CD4-positive, alpha-beta T cell (primary cell): ENCODE measurements at regions of chrX and their contacts with region 1.

Region 1: DNA sequence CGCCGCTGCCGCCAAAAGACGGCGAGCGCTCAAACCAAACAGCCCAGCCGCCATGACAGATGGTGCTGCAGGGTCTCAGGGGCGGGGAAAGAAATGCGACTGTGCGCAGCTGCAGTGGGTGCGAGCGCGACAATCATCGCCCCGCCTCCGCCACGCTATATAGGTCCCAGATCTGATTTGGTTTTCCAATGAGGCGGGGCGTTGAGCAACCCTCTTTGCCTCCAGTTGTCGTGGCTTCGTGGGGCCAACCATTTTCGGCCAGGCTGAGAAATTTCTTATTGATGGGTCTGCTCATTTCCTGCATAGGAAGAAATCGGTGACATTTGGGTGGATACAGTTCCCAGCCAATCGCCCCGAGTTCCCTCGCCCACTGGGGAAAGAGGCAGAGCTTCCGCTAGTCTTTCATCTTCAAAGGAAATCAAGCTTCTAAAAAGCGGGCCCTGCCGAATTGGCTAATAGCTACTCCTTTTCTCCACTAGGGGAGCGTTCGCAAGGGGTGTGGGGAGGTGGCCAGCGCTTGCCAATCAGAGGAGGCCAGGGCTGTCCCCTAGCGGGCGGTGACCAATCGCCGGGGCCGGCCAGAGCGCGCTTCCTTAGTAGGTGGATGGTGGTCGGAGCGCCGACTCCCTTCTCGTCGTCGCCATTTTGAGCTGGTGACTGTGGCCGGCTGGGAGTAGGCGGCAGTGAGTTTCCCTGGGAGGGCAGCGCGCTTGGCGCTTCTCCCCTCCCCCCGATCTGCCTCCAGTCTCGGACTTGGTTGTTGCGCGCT is at the starts of genes NDUFB11 and RBM10:
- DNase-seq: peak; percentile 74 to 95 (median 84)
- ATAC-seq: peak; percentile 81
- H3K4me3 ChIP-seq: peak within 1 kb of the TSS; percentile 85
- H3K4me3 Mint-ChIP-seq: peak within 1 kb of the TSS; percentile 98
- H3K27ac ChIP-seq: peak within 1 kb of the TSS; percentile 88 to 93
- H3K27ac Mint-ChIP-seq: peak within 1 kb of the TSS; percentile 99
- H3K4me1 ChIP-seq: peaks cover 31% of the 10 kb centered on the region
- H3K4me1 Mint-ChIP-seq: peaks cover 52% of the 10 kb centered on the region
- H3K27me3 ChIP-seq: no peaks in the 10 kb centered on the region
- H3K27me3 Mint-ChIP-seq: no peaks in the 10 kb centered on the region
- CTCF ChIP-seq: peak; percentile 58
- total RNA-seq, gene NDUFB11: 50.1 to 53.2 TPM
- total RNA-seq, gene RBM10: 27.3 to 29.4 TPM

Region 2: DNA sequence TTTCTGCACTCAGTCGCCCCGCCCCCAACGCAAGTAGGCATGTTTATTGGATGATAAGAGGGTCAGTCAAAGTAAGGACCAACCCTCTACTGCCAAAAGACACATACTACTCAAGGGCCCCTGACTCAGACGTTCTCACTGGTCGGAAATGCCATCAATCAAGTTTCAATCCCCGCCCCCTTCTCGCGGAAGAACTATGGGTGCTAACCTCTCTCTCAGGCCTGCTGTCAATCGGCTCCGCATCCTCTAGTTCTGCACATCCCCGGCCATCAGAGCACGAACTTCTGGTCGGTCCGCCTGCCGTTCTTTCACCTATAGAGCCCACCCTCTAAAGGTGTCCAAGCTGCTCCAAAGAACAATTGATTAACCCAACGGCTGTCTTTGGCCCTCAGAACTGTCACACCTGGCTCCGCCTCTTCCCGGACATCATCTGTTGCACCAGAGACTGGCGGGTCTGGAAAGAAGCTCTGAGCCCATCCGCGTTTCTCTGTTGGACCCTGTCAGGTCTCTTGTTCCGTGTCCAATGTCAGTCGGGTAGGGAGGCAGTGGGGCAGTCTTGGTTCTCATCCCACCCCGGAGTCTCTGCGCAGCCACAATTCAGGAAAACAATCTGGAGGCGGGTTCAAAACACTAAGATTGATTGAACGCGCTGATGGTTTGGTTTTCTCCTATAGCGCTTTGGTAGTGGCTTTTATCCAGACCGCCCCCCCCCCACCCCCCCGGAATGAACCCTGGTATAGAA is 15.5 kb before region 1 on chrX:
- CTCF ChIA-PET with region 1: interaction called, 14 read pairs
- POLR2A ChIA-PET with region 1: interaction called, 58 read pairs
- intact Hi-C with region 1: loop called (anchors 1 kb)
- DNase-seq: peak; percentile 77 to 95 (median 84)
- ATAC-seq: peak; percentile 98
- H3K4me3 ChIP-seq: peak overlapping the region; percentile 75
- H3K4me3 Mint-ChIP-seq: peak overlapping the region; percentile 99
- H3K27ac ChIP-seq: peak overlapping the region; percentile 53 to 60
- H3K27ac Mint-ChIP-seq: peak overlapping the region; percentile 98
- H3K4me1 ChIP-seq: peaks cover 13% of the 10 kb centered on the region
- H3K4me1 Mint-ChIP-seq: peaks cover 10% of the 10 kb centered on the region
- H3K27me3 ChIP-seq: no peaks in the 10 kb centered on the region
- H3K27me3 Mint-ChIP-seq: no peaks in the 10 kb centered on the region
- CTCF ChIP-seq: no peak

Region 3: GRCh38 chrX:47217642-47218279 is 73.0 kb after region 1 on chrX:
- CTCF ChIA-PET with region 1: interaction called, 3 read pairs
- POLR2A ChIA-PET with region 1: interaction called, 19 read pairs
- intact Hi-C with region 1: no loop called
- DNase-seq: peak; percentile 89 to 99 (median 96)
- ATAC-seq: peak; percentile 81
- H3K4me3 ChIP-seq: peak overlapping the region; percentile 81
- H3K4me3 Mint-ChIP-seq: peak overlapping the region; percentile 98
- H3K27ac ChIP-seq: peak overlapping the region; percentile 89 to 99
- H3K27ac Mint-ChIP-seq: peak overlapping the region; percentile 98
- H3K4me1 ChIP-seq: peaks cover 30% of the 10 kb centered on the region
- H3K4me1 Mint-ChIP-seq: peaks cover 38% of the 10 kb centered on the region
- H3K27me3 ChIP-seq: no peaks in the 10 kb centered on the region
- H3K27me3 Mint-ChIP-seq: no peaks in the 10 kb centered on the region
- CTCF ChIP-seq: no peak

Region 4: DNA sequence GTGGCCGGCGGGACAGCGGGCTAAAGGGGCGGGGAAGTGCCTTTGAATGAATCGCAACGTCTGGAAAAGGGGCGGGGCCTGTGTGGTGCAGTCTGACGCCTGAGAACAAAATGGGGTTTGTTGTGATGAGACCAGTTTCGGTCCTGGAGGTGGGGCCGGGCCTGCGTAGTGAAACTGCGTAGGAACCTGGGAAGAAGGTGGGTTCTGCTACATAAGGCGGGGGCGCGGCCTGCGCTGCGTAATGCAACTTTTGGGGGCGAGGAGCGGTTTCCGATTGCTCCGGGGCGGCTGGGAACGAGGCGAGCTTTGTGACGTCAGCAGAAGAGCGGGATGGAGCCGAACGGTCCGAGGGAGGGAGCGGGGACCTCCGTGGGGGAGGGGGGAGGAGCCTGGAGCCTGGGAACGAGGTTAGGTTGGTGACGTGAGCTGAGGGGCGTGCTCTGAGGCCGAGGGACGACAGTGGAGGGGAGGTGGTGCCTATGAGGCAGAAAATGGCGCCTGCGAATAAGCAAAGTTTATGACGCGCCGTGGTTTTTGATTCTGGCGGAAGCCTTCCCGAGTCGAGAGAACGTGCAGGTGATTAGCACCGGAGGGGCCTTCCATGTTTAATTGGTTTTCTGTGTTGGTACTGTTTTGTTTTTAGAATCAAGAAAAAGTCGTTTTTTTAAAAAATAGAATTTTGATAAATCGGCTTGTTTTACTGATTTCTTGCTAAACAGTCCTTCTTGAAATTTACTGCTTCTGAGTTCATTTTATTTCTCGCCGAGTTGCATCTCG is 88.7 kb after region 1 on chrX:
- CTCF ChIA-PET with region 1: interaction called, 6 read pairs
- POLR2A ChIA-PET with region 1: interaction called, 29 read pairs
- intact Hi-C with region 1: no loop called
- DNase-seq: peak; percentile 87 to 98 (median 92)
- ATAC-seq: peak; percentile 88
- H3K4me3 ChIP-seq: peak overlapping the region; percentile 91
- H3K4me3 Mint-ChIP-seq: peak overlapping the region; percentile 91
- H3K27ac ChIP-seq: peak overlapping the region; percentile 95 to 98
- H3K27ac Mint-ChIP-seq: peak overlapping the region; percentile 93
- H3K4me1 ChIP-seq: peaks cover 10% of the 10 kb centered on the region
- H3K4me1 Mint-ChIP-seq: peaks cover 31% of the 10 kb centered on the region
- H3K27me3 ChIP-seq: no peaks in the 10 kb centered on the region
- H3K27me3 Mint-ChIP-seq: no peaks in the 10 kb centered on the region
- CTCF ChIP-seq: no peak

Region 5: DNA sequence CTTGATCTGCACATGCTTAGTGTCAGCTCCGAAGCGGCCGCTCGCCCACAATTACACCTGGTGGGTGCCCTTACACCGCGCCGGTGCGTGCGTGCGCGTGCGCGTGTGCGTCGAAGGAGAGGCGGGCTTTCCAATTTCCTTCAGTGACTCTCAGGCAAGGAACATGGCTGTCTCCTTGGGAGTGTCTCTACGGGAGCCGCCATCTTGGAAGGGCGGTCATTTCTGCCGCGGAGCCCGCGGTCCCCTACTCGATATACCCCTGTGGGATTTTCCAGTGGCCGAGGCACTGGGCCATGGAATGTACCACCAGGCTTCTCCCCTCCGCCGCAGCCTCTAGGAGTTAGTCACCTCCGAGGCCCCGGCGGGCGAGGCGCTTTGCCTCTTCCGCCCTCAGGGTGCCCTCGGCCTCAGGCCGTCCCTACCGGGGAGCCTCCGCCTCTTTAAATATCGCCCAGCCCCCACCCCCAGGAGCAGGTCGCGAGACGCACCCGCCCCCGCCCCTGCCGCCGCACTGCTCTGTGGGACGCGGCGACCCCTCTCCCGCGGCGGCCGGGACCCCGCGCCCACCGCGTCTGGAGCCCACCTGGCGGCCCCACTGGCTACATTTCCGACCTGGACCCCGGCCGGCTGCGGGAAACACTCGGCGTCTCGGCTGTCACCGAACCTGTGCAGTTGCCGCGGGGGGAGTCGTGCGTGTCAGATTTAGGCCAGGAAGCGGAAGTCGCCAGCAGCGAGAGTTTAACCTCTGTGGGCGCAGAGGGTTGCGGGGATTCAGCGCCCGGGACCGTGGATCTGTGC is 337.9 kb after region 1 on chrX and contains the start of gene ZNF41:
- CTCF ChIA-PET with region 1: no interaction called
- POLR2A ChIA-PET with region 1: interaction called, 5 read pairs
- intact Hi-C with region 1: loop called in 1 of 2 experiments (anchors 10 kb)
- DNase-seq: peak; percentile 52 to 93 (median 74)
- ATAC-seq: peak; percentile 81
- H3K4me3 ChIP-seq: peak within 1 kb of the TSS; percentile 88
- H3K4me3 Mint-ChIP-seq: peak within 1 kb of the TSS; percentile 96
- H3K27ac ChIP-seq: peak within 1 kb of the TSS; percentile 84
- H3K27ac Mint-ChIP-seq: peak within 1 kb of the TSS; percentile 94
- H3K4me1 ChIP-seq: peaks cover 21% of the 10 kb centered on the region
- H3K4me1 Mint-ChIP-seq: peaks cover 45% of the 10 kb centered on the region
- H3K27me3 ChIP-seq: no peaks in the 10 kb centered on the region
- H3K27me3 Mint-ChIP-seq: no peaks in the 10 kb centered on the region
- CTCF ChIP-seq: no peak
- total RNA-seq, gene ZNF41: 3.1 to 3.9 TPM

Region 6: DNA sequence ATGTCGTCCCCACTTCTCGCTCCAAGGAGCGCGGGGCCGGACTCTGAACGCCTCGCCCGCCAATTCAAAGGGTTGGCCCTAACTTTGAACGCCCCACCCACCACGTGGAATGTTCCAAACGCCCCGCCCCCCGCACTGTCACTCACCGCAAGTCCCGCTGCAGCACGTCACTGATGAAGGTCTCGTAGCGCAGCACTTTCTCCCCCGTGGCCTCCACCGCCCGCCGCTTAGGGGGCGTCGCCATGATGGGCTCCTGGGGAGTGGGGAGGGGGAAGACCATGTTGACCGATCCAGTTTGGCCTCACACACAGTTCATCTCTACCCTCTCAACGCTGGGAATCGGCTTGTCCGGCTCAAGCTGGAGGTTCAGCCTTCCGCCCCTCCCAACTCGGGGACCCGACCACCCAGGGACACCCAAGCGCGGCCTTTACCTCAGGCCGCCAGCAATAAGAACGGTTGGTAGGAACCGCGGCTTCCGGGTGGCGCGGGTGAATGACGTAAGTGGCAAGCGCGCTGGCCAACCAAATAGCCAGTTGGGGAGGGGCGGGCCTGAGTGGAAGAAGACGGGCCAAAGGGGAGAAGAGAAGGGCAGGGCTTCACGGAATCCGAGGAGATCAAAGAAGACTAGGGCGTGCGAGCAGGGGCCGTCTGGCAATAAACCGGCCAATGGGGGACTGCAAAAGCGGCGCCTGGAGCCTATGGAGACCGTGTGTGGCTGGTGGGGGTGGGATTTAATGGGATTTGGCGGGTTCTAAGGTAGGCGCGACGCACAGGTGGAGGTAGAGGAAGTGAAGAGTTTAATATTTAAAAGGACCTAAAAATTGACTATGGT is 514.1 kb after region 1 on chrX and contains the start of gene UXT:
- CTCF ChIA-PET with region 1: no interaction called
- POLR2A ChIA-PET with region 1: interaction called, 4 read pairs
- intact Hi-C with region 1: loop called in 1 of 2 experiments (anchors 5 kb)
- DNase-seq: peak; percentile 82 to 96 (median 87)
- ATAC-seq: peak; percentile 82
- H3K4me3 ChIP-seq: peak within 1 kb of the TSS; percentile 77
- H3K4me3 Mint-ChIP-seq: peak within 1 kb of the TSS; percentile 89
- H3K27ac ChIP-seq: peak within 1 kb of the TSS; percentile 94 to 99
- H3K27ac Mint-ChIP-seq: peak within 1 kb of the TSS; percentile 97
- H3K4me1 ChIP-seq: peaks cover 14% of the 10 kb centered on the region
- H3K4me1 Mint-ChIP-seq: peaks cover 24% of the 10 kb centered on the region
- H3K27me3 ChIP-seq: no peaks in the 10 kb centered on the region
- H3K27me3 Mint-ChIP-seq: no peaks in the 10 kb centered on the region
- CTCF ChIP-seq: no peak
- total RNA-seq, gene UXT: 188 to 197 TPM

Region 7: GRCh38 chrX:49002091-49002935 is 1857.5 kb after region 1 on chrX and contains the start of gene GRIPAP1:
- CTCF ChIA-PET with region 1: no interaction called
- POLR2A ChIA-PET with region 1: no interaction called
- intact Hi-C with region 1: loop called in 1 of 2 experiments (anchors 5 kb)
- DNase-seq: peak; percentile 61 to 93 (median 72)
- ATAC-seq: peak; percentile 77
- H3K4me3 ChIP-seq: peak within 1 kb of the TSS; percentile 93
- H3K4me3 Mint-ChIP-seq: peak within 1 kb of the TSS; percentile 96
- H3K27ac ChIP-seq: peak within 1 kb of the TSS; percentile 84 to 96
- H3K27ac Mint-ChIP-seq: peak within 1 kb of the TSS; percentile 98
- H3K4me1 ChIP-seq: peaks cover 27% of the 10 kb centered on the region
- H3K4me1 Mint-ChIP-seq: peaks cover 26% of the 10 kb centered on the region
- H3K27me3 ChIP-seq: no peaks in the 10 kb centered on the region
- H3K27me3 Mint-ChIP-seq: no peaks in the 10 kb centered on the region
- CTCF ChIP-seq: no peak
- total RNA-seq, gene GRIPAP1: 100 to 101 TPM